Endothelial cell of umbilical vein (primary cell): ENCODE measurements at regions of chr15 and their contacts with region 1.

Region 1: GRCh38 chr15:29788433-29789034 is 33.7 kb downstream of the TJP1 start:
- DNase-seq: no peak
- H3K4me3 ChIP-seq: no peak overlapping the region
- H3K27ac ChIP-seq: no peak overlapping the region
- H3K4me1 ChIP-seq: peaks cover 17% of the 10 kb centered on the region
- H3K27me3 ChIP-seq: no peaks in the 10 kb centered on the region
- CTCF ChIP-seq: no peak
- POLR2A ChIP-seq: no peak

Region 2: GRCh38 chr15:29774900-29775299 is 13.6 kb before region 1 on chr15:
- CTCF ChIA-PET with region 1: interaction called, 3 read pairs
- POLR2A ChIA-PET with region 1: no interaction called
- dilution Hi-C with region 1: no loop called
- intact Hi-C with region 1: loop called (anchors 2 kb)
- DNase-seq: no peak
- H3K4me3 ChIP-seq: no peak overlapping the region
- H3K27ac ChIP-seq: no peak overlapping the region
- H3K4me1 ChIP-seq: no peaks in the 10 kb centered on the region
- H3K27me3 ChIP-seq: no peaks in the 10 kb centered on the region
- CTCF ChIP-seq: no peak
- POLR2A ChIP-seq: no peak

Region 3: GRCh38 chr15:29805043-29805707 is 16.6 kb after region 1 on chr15:
- CTCF ChIA-PET with region 1: interaction called, 4 read pairs
- POLR2A ChIA-PET with region 1: no interaction called
- dilution Hi-C with region 1: no loop called
- intact Hi-C with region 1: loop called (anchors 2 kb)
- DNase-seq: peak; percentile 81
- H3K4me3 ChIP-seq: no peak overlapping the region
- H3K27ac ChIP-seq: no peak overlapping the region
- H3K4me1 ChIP-seq: peaks cover 35% of the 10 kb centered on the region
- H3K27me3 ChIP-seq: no peaks in the 10 kb centered on the region
- CTCF ChIP-seq: no peak
- POLR2A ChIP-seq: no peak

Region 4: DNA sequence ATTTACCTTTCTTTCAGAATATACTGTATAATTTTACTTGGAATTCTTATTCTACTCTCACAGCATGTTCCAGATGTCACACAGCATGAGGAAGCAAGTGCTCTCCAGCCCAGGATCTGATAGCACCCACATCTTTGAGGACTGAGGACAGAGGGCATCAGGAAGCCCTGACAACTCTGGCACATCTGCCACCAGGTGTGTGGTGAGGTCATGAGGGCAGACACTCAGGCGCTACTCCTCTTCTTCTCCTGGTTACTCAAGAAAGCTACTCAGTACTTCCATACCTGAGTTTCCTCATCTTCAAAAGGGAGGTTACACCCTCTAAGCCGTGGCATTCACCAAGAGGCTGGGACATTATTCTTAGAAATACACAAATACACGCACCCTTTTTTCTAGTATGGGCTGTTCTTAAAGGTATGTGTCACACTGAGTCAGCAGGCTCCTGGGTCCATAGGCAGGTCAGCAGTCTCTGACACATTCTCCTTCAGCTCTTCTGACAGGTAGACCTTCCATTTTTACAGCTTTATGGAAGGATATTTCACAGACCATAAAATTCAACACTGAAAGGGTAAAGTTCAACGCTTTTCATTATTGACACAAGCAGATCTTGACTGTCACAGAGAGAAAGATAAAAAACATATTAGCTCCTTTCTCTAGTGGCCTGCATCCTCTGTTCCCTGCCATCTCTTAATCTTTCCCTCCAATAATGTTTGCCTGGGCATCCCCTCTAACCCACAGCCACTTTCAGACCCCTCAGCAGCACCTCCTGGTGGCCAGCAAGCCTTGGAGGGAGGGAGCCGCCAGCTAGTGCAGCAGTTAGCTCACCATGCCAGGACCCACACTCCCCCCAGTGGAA is 136.9 kb after region 1 on chr15:
- CTCF ChIA-PET with region 1: no interaction called
- POLR2A ChIA-PET with region 1: no interaction called
- dilution Hi-C with region 1: no loop called
- intact Hi-C with region 1: no loop called
- DNase-seq: peak; percentile 72
- H3K4me3 ChIP-seq: no peak overlapping the region
- H3K27ac ChIP-seq: no peak overlapping the region
- H3K4me1 ChIP-seq: peaks cover 12% of the 10 kb centered on the region
- H3K27me3 ChIP-seq: no peaks in the 10 kb centered on the region
- CTCF ChIP-seq: peak; percentile 88 to 90
- POLR2A ChIP-seq: no peak